HepG2 (cell line): ENCODE measurements at regions of chr5 and their contacts with region 1.

Region 1: DNA sequence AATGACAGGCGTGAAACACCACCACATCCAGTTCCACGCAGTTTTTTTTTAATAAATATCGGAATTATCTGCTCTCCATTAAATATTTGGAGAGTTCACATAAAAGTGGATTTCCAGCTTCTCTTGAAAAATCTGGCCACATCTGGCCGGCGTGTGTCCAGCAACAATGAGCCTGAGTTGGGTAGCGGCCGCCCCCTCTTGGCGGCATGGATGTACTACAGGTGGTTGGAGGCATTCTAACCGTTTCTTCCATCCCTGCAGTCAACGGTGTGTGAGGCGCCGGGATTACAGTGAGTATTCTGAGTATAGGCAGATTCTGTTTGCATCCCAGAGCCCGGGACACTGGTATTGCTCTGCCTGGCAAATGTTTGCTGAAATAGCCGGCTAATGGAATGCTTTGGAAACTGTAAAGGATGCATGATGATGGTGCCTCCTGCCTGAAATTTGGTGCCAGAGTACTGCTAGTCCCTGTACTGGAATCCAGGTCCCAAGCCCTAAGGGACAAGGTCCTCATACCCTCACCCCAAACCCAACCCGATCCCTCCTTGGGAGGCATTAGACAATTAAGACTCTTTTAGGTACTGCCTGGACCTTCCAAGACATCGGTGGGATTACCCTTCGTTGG is 13.6 kb upstream of the GM2A start:
- DNase-seq: peak; percentile 63
- ATAC-seq: peak; percentile 69
- H3K4me3 ChIP-seq: peak overlapping the region; percentile 35 to 68 (median 37); a peak in 5 of 6 replicates
- H3K27ac ChIP-seq: no peak overlapping the region
- H3K4me1 ChIP-seq: peaks cover 47% of the 10 kb centered on the region
- H3K27me3 ChIP-seq: peaks cover 2 to 14% of the 10 kb centered on the region in 2 experiments; a peak in 2 of 5 replicates
- CTCF ChIP-seq: peak; percentile 88
- EP300 ChIP-seq: no peak
- POLR2A ChIP-seq: no peak
- RAD21 ChIP-seq: peak; percentile 81

Region 2: GRCh38 chr5:151051066-151051930 is 188.1 kb before region 1 on chr5:
- CTCF ChIA-PET with region 1: no interaction called
- POLR2A ChIA-PET with region 1: no interaction called
- in situ Hi-C with region 1: loop called (anchors 10 kb)
- intact Hi-C with region 1: no loop called
- DNase-seq: peak; percentile 68
- ATAC-seq: peak; percentile 91
- H3K4me3 ChIP-seq: no peak overlapping the region
- H3K27ac ChIP-seq: no peak overlapping the region
- H3K4me1 ChIP-seq: no peaks in the 10 kb centered on the region
- H3K27me3 ChIP-seq: no peaks in the 10 kb centered on the region
- CTCF ChIP-seq: peak; percentile 88
- EP300 ChIP-seq: no peak
- POLR2A ChIP-seq: no peak
- RAD21 ChIP-seq: peak; percentile 83

Region 3: GRCh38 chr5:151126199-151126645 is 113.1 kb before region 1 on chr5:
- CTCF ChIA-PET with region 1: interaction called, 19 read pairs
- POLR2A ChIA-PET with region 1: interaction called, 5 read pairs
- in situ Hi-C with region 1: loop called (anchors 10 kb)
- intact Hi-C with region 1: loop called (anchors 1 kb)
- DNase-seq: peak; percentile 68
- ATAC-seq: peak; percentile 83
- H3K4me3 ChIP-seq: no peak overlapping the region
- H3K27ac ChIP-seq: no peak overlapping the region
- H3K4me1 ChIP-seq: 0 out of 2 replicates have a peak, but pooled peaks cover 4% of the 10 kb centered on the region
- H3K27me3 ChIP-seq: no peaks in the 10 kb centered on the region
- CTCF ChIP-seq: peak; percentile 93
- EP300 ChIP-seq: no peak
- POLR2A ChIP-seq: no peak
- RAD21 ChIP-seq: peak; percentile 87

Region 4: DNA sequence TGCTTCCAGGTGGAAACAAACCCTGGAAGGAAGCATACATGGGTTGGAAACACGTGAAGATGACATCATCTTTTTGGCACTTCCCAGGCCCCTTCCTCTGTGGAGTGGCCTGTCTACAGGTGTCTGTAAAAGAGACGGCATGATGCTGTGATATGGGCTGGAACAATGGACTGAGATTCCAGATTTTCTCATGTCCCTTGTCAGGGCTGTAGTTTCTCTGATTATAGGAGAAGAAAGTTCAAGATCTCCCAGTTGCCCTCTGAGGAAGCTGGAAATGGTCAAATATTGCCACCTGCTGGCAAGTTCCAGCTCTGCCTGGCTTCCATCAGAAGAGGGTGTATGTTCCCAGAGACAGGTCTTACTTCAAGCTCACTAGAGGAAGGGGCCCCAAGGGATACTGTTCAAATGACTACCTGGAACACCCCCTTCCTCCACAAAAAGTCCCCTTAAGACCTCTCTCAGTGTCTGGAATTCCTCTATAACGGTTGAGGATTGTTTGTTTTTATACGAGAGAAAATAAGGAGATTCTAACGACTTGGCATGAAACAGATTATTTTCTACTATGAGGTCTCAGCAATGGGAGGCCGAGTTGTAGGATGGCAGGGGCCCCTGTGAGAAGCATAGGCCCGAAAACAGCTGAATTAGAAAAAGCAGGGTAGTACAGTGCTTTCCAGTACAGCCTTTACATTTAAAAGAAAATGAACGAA is 74.5 kb before region 1 on chr5:
- CTCF ChIA-PET with region 1: interaction called, 6 read pairs
- POLR2A ChIA-PET with region 1: no interaction called
- in situ Hi-C with region 1: no loop called
- intact Hi-C with region 1: loop called (anchors 1 kb)
- DNase-seq: peak; percentile 69
- ATAC-seq: peak; percentile 91
- H3K4me3 ChIP-seq: no peak overlapping the region
- H3K27ac ChIP-seq: no peak overlapping the region
- H3K4me1 ChIP-seq: peaks cover 31% of the 10 kb centered on the region
- H3K27me3 ChIP-seq: no peaks in the 10 kb centered on the region; a peak in 1 of 5 replicates
- CTCF ChIP-seq: peak; percentile 93
- EP300 ChIP-seq: no peak
- POLR2A ChIP-seq: no peak
- RAD21 ChIP-seq: peak; percentile 87

Region 5: DNA sequence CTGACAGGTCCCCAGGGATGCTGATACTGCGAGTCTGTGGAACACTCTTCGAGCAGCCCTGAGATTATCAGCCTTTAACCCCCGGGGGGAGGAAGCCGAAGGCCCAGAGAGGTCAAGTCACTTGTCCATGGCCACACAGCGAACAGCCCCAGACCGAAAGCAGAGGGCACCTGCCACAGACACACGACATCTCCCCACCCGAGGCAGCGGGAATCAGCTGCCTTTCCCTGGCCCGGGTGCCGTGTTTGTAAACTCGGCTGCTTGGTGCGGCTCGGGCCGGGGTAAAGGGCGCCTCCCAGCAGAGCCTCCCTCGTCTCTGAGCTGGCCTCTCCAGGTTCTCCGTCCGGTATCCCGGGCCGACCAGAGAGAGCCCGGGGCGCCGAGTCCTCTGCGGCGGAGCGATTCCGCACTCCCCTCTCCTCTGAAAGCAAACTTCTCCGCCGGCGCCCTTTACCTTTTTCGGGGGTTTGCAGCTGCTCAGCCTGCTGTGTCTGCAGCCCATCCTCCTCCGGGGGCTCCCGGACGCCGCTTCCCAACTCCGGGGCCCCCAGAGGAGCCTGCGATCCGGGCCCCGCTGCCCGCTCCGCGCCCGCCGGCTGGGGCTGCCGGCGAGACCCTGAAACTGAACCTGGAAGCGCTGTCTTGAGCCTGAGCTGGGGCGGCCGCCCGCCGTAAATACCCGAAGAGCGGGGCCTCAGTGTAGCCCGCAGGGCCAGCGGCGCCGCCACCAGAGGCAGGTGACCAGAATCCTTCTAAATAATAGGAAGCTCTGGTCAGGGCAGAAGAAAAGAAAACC is 15.7 kb before region 1 on chr5 and contains the start of gene CCDC69:
- CTCF ChIA-PET with region 1: no interaction called
- POLR2A ChIA-PET with region 1: interaction called, 89 read pairs
- in situ Hi-C with region 1: no loop called
- intact Hi-C with region 1: loop called (anchors 1 kb)
- DNase-seq: peak; percentile 52
- ATAC-seq: peak; percentile 95
- H3K4me3 ChIP-seq: peak within 1 kb of the TSS; percentile 81 to 90 (median 87)
- H3K27ac ChIP-seq: peak within 1 kb of the TSS; percentile 66
- H3K4me1 ChIP-seq: peaks cover 29% of the 10 kb centered on the region
- H3K27me3 ChIP-seq: no peaks in the 10 kb centered on the region; a peak in 1 of 5 replicates
- CTCF ChIP-seq: 0 out of 2 replicates have a peak, but pooled peaks have one; percentile 21
- EP300 ChIP-seq: no peak
- POLR2A ChIP-seq: peak; percentile 58 to 67
- RAD21 ChIP-seq: peak; percentile 41; the same call in 1 of the 2 replicates
- total RNA-seq, gene CCDC69: 45.2 and 46.3 TPM in 2 replicates

Region 6: GRCh38 chr5:151252762-151253604 is 13.6 kb after region 1 on chr5 and contains the start of gene GM2A:
- CTCF ChIA-PET with region 1: no interaction called
- POLR2A ChIA-PET with region 1: interaction called, 25 read pairs
- in situ Hi-C with region 1: no loop called
- intact Hi-C with region 1: no loop called
- DNase-seq: peak; percentile 99
- ATAC-seq: peak; percentile 93
- H3K4me3 ChIP-seq: peak within 1 kb of the TSS; percentile 83 to 87 (median 84)
- H3K27ac ChIP-seq: peak within 1 kb of the TSS; percentile 84
- H3K4me1 ChIP-seq: peaks cover 41% of the 10 kb centered on the region
- H3K27me3 ChIP-seq: no peaks in the 10 kb centered on the region; a peak in 1 of 5 replicates
- CTCF ChIP-seq: no peak
- EP300 ChIP-seq: no peak
- POLR2A ChIP-seq: peak; percentile 90 to 98
- RAD21 ChIP-seq: no peak
- total RNA-seq, gene GM2A: 16.6 and 29.6 TPM in 2 replicates